A549 (cell line): ENCODE measurements at regions of chr14 and their contacts with region 1.

Region 1: DNA sequence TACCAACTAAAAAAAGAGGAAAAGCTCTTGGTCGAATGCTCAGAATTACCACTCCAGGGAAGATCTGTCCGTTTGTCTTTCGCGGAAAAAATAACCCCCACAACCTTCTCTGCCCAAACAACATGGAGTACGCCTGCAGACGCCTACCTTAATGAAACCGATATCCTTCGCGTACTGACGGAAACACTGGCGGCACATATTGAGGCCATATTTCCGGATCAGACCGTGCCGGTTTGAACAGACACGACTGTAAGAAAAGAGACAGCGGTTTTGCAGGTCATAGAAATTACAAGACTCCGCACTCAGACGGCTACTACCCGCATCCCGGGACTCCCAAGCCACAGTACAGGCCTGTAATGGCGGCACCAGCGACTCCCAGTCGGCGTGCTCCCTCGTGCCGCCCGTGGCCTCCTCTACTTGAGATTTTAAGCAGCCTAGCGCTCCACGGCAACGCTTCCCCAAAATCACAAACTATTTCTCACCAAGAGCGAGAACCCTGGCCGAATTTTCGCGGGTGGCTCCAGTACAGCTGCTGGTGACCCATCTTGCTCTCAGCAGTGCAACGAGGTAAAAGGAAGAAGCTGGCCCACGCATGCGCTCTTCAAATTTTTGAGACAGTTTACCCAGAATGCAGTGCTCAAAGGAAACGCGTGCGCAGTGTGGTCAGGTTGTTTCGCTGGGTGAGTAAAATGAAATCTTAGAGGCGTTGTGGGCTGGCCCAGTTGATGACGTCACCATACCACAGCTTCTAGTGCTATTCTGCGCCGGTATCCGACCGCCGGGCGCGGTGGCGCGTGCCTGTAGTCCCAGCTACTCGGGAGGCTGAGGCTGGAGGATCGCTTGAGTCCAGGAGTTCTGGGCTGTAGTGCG is at the start of gene RPS29:
- DNase-seq: peak; percentile 93 to 99
- ATAC-seq: peak; percentile 86 to 89
- H3K4me3 ChIP-seq: peak within 1 kb of the TSS; percentile 64
- H3K27ac ChIP-seq: peak within 1 kb of the TSS; percentile 86 to 96
- H3K4me1 ChIP-seq: peaks cover 30% of the 10 kb centered on the region
- CTCF ChIP-seq: no peak
- EP300 ChIP-seq: no peak
- POLR2A ChIP-seq: peak; percentile 78
- RAD21 ChIP-seq: no peak
- polyA plus RNA-seq, gene RPS29: 3,909 and 5,167 TPM in 2 replicates

Region 2: DNA sequence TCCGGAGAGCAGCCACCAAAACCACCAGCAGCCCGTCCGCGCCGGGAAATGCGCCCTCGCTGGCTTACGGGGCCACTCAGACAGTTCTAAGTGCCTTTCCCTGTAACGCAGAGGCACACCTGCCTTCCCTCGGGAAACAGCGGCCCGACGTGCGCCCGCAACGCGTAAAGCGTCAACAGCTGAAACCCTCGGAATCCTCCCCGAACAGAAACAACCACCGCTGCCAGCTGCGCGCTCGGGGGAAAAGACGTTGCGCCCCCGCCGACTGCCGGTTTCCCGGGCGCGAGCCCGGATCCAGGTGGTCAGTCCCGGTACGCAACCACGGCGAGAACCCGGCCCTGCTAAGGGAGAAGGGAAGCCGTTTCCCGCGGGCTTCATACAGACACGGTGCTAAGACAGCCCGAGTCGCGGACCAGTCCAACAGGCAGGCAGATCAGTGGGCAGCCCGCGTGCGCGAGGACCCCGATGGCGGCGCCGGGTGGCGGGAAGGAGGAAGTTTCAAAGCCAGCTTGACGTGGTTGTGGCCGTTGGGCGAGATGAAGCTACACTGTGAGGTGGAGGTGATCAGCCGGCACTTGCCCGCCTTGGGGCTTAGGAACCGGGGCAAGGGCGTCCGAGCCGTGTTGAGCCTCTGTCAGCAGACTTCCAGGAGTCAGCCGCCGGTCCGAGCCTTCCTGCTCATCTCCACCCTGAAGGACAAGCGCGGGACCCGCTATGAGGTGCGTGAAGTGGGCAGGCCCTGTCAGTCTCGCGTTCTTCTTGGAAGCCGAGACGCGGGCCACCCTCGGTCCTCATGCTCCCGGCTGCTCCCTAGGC is 12.7 kb after region 1 on chr14 and contains the start of gene LRR1:
- CTCF ChIA-PET with region 1: interaction called, 18 read pairs
- POLR2A ChIA-PET with region 1: interaction called, 27 read pairs
- DNase-seq: peak; percentile 79 to 91
- ATAC-seq: peak; percentile 89 to 90
- H3K4me3 ChIP-seq: peak within 1 kb of the TSS; percentile 62
- H3K27ac ChIP-seq: peak within 1 kb of the TSS; percentile 92 to 96
- H3K4me1 ChIP-seq: 0 out of 3 replicates have a peak, but pooled peaks cover 7% of the 10 kb centered on the region
- CTCF ChIP-seq: no peak
- EP300 ChIP-seq: no peak
- POLR2A ChIP-seq: peak; percentile 71
- RAD21 ChIP-seq: no peak
- polyA plus RNA-seq, gene LRR1: 34.6 and 50.7 TPM in 2 replicates

Region 3: DNA sequence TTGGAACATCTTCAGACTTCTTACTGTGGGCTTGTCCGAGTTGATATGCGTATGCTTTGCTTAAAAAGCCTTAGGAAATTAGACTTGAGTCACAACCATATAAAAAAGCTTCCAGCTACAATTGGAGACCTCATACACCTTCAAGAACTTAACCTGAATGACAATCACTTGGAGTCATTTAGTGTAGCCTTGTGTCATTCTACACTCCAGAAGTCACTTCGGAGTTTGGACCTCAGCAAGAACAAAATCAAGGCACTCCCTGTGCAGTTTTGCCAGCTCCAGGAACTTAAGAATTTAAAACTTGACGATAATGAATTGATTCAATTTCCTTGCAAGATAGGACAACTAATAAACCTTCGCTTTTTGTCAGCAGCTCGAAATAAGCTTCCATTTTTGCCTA is 21.5 kb after region 1 on chr14:
- CTCF ChIA-PET with region 1: interaction called, 15 read pairs
- POLR2A ChIA-PET with region 1: no interaction called
- DNase-seq: no peak
- ATAC-seq: no peak
- H3K4me3 ChIP-seq: no peak overlapping the region
- H3K27ac ChIP-seq: no peak overlapping the region
- H3K4me1 ChIP-seq: peaks cover 5% of the 10 kb centered on the region; the same call in 1 of the 3 replicates
- CTCF ChIP-seq: no peak
- EP300 ChIP-seq: no peak
- POLR2A ChIP-seq: no peak
- RAD21 ChIP-seq: no peak